Activated CD4-positive, alpha-beta T cell treated with anti-CD3 and anti-CD28 coated beads for 36 hours (primary cell): ENCODE measurements at regions of chr4 and their contacts with region 1.

Region 1: DNA sequence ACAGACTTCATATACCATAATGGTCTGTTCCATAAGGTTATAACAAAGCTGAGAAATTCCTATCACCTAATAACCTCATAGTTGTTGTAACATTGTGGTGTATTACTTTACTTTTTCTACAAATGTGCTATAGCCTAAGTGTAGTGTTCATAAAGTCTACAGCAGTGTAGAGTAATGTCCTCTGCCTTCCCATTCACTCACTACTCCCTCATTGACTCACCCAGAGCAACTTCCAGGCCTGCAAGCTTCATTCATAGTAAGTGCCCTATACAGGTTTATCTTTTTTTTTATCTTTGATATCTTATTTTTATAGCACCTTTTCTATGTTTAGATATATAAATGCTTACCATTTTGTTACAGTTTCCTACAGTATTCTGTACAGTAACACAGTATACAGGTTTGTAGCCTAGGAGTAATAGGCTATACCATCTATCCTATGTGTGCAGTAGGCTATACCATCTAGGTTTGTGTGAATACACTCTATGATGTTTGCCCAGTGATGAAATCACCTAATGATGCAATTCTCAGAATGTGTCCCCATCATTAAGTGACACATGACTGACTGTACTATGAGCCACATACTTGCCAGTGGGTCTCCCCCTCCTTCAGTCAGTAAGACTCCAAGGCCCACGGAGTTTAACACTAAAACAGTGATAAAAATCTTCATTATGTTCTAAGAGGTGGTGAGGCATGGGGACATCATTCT is 299.9 kb downstream of the UNC5C start:
- DNase-seq: peak; percentile 36
- ATAC-seq: peak; percentile 88
- H3K4me3 Mint-ChIP-seq: no peak overlapping the region
- H3K27ac Mint-ChIP-seq: peak overlapping the region; percentile 84
- H3K4me1 Mint-ChIP-seq: peaks cover 28% of the 10 kb centered on the region
- H3K27me3 Mint-ChIP-seq: no peaks in the 10 kb centered on the region

Region 2: GRCh38 chr4:95289028-95289634 is 40.3 kb after region 1 on chr4:
- CTCF ChIA-PET with region 1: no interaction called
- POLR2A ChIA-PET with region 1: no interaction called
- intact Hi-C with region 1: loop called in 1 of 2 experiments (anchors 5 kb)
- DNase-seq: no peak
- ATAC-seq: no peak
- H3K4me3 Mint-ChIP-seq: no peak overlapping the region
- H3K27ac Mint-ChIP-seq: no peak overlapping the region
- H3K4me1 Mint-ChIP-seq: peaks cover 35% of the 10 kb centered on the region
- H3K27me3 Mint-ChIP-seq: no peaks in the 10 kb centered on the region

Region 3: GRCh38 chr4:95505151-95505550 is 256.3 kb after region 1 on chr4:
- CTCF ChIA-PET with region 1: no interaction called
- POLR2A ChIA-PET with region 1: no interaction called
- intact Hi-C with region 1: loop called (anchors 1 to 5 kb)
- DNase-seq: no peak
- ATAC-seq: no peak
- H3K4me3 Mint-ChIP-seq: no peak overlapping the region
- H3K27ac Mint-ChIP-seq: no peak overlapping the region
- H3K4me1 Mint-ChIP-seq: peaks cover 6% of the 10 kb centered on the region
- H3K27me3 Mint-ChIP-seq: peaks cover 2% of the 10 kb centered on the region